Calu3 (cell line): ENCODE measurements at regions of chr7 and their contacts with region 1.

Region 1: GRCh38 chr7:47088329-47089067 is 493.4 kb downstream of the TNS3 start:
- DNase-seq: peak; percentile 77
- H3K4me3 Mint-ChIP-seq: no peak overlapping the region
- H3K27ac Mint-ChIP-seq: no peak overlapping the region
- H3K4me1 Mint-ChIP-seq: no peaks in the 10 kb centered on the region
- H3K27me3 Mint-ChIP-seq: no peaks in the 10 kb centered on the region
- CTCF ChIP-seq: peak; percentile 98

Region 2: DNA sequence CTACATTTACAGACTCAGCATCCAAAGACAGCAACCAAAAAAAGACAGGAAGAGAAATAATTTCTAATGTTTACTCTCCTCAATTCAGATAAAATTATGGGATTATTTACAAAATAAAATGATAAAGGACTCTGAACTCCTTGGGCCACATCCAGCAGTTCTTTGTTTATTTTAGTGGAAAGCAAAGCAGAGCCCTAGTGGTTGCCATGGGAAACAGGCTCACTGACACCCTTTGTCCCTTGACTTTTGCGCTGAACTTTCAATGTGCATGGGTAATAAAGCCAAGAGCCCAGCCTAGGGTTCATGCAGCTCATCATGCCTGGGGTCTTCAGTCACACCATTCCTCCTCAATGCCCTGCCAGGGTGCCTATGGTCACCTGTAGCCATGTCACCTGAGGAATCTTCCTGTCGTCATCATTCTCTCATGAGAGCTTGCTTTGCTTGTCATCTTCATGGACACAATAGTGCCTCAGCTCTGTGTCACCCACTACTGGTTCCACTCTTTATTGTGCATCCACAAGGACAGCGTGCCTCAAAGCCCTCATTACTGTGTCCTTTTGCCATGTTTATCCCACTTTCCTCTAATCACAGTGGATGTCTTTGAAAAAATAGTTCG is 724.7 kb before region 1 on chr7:
- CTCF ChIA-PET with region 1: no interaction called
- intact Hi-C with region 1: loop called (anchors 2 kb)
- DNase-seq: no peak
- H3K4me3 Mint-ChIP-seq: no peak overlapping the region
- H3K27ac Mint-ChIP-seq: no peak overlapping the region
- H3K4me1 Mint-ChIP-seq: peaks cover 19% of the 10 kb centered on the region
- H3K27me3 Mint-ChIP-seq: no peaks in the 10 kb centered on the region
- CTCF ChIP-seq: peak; percentile 29

Region 3: GRCh38 chr7:46569133-46569465 is 519.4 kb before region 1 on chr7:
- CTCF ChIA-PET with region 1: interaction called, 3 read pairs
- intact Hi-C with region 1: loop called (anchors 5 kb)
- DNase-seq: peak; percentile 86
- H3K4me3 Mint-ChIP-seq: peak overlapping the region; percentile 56
- H3K27ac Mint-ChIP-seq: peak overlapping the region; percentile 75
- H3K4me1 Mint-ChIP-seq: peaks cover 94% of the 10 kb centered on the region
- H3K27me3 Mint-ChIP-seq: no peaks in the 10 kb centered on the region
- CTCF ChIP-seq: no peak

Region 4: DNA sequence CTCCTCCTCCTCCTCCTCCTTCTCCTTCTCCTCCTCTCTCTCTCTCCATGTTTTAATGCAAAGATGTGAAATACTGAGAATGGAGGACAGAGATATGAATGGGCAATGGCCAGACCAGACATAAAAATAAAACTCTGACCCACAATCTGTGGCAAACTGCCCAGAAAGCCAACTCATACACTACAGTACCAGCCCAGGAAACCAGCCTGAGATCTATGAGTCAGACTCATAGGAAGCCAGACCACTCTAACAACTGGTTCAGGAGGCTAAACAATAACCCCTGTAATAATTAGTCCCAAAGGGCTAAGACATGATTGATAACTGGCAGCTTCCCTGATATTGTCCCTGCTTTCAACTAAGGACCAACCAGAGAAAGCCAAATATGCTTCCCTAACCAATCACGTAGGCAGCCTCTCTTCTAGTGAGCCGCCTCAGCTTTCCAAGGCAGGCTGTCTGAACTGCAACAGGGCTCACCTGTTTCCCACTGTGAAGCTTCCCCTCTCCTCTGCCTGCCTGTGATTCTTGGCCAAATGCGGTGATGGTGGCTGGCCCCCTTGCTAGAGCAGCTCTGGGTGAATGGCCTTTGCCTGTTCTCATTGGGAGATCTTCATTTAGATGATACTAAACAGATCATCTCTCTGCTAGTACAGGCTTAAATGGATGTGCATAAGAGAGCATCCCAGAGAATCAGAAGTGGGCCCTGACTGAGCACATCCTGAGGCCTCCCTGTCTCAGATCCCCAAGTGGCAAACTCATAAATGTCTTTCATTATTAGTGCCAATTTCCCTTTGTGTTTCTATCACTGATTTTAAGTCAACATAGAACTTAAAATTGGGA is 324.2 kb before region 1 on chr7:
- CTCF ChIA-PET with region 1: no interaction called
- intact Hi-C with region 1: loop called (anchors 5 kb)
- DNase-seq: peak; percentile 90
- H3K4me3 Mint-ChIP-seq: peak overlapping the region; percentile 4
- H3K27ac Mint-ChIP-seq: peak overlapping the region; percentile 80
- H3K4me1 Mint-ChIP-seq: peaks cover 30% of the 10 kb centered on the region
- H3K27me3 Mint-ChIP-seq: no peaks in the 10 kb centered on the region
- CTCF ChIP-seq: no peak

Region 5: DNA sequence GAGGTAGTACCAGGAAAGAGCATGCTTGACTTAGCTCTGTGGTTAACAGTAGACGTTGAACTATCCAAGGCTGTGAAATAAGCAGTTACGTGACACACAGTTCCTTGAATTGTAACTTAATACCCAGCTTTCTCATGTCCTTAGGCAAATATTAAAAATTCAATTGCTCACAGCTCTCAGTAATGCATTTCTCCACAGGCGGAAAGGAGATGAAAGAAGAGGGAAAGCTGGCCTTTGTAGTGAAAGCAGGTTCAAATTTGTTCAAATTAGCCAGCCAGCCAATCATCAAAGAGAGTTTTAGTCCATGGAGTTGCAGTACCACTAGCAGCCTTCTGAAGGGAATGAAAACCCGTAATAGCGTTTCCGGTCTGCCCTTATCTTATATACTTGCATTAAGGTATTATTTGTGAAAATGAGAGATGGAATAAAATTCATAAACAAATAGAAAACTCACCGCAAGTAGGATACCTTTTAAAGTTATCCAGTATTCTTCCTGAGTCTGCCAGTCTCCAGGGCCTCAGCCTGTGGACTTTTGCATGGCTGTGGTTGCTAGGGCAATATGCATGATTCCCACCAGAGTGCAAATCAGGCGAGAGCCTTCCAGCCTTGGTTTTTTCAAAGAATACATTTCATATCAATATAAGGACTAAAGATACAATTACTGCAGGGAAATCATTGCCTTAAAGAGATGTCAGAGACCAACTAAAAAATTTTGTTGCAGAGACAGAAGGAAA is 302.1 kb before region 1 on chr7:
- CTCF ChIA-PET with region 1: no interaction called
- intact Hi-C with region 1: loop called (anchors 2 kb)
- DNase-seq: peak; percentile 69
- H3K4me3 Mint-ChIP-seq: peak overlapping the region; percentile 45
- H3K27ac Mint-ChIP-seq: peak overlapping the region; percentile 95
- H3K4me1 Mint-ChIP-seq: peaks cover 29% of the 10 kb centered on the region
- H3K27me3 Mint-ChIP-seq: no peaks in the 10 kb centered on the region
- CTCF ChIP-seq: no peak

Region 6: DNA sequence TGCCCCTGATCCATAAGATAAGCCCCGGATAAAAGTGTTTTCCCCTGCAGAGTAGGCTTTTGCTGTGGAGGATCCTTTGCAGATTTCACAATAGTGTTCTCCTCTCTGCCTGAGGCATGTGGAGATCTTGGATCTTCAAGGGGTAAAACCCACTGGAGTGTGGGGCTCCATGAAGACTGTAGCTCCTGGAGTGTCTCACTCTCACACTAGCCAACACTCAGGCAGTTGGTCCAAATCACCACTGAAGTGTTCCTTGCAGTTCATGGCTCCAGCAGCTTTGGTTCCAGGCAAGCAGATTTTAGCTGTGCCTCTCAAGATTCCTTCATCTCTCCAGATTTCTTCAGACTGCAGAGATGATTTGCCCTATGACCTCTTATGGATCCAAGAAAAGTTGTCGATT is 171.9 kb before region 1 on chr7:
- CTCF ChIA-PET with region 1: no interaction called
- intact Hi-C with region 1: no loop called
- DNase-seq: no peak
- H3K4me3 Mint-ChIP-seq: no peak overlapping the region
- H3K27ac Mint-ChIP-seq: no peak overlapping the region
- H3K4me1 Mint-ChIP-seq: no peaks in the 10 kb centered on the region
- H3K27me3 Mint-ChIP-seq: no peaks in the 10 kb centered on the region
- CTCF ChIP-seq: no peak

Region 7: GRCh38 chr7:46932676-46933424 is 155.6 kb before region 1 on chr7:
- CTCF ChIA-PET with region 1: no interaction called
- intact Hi-C with region 1: loop called (anchors 2 kb)
- DNase-seq: peak; percentile 41
- H3K4me3 Mint-ChIP-seq: peak overlapping the region; percentile 18
- H3K27ac Mint-ChIP-seq: peak overlapping the region; percentile 99
- H3K4me1 Mint-ChIP-seq: peaks cover 59% of the 10 kb centered on the region
- H3K27me3 Mint-ChIP-seq: no peaks in the 10 kb centered on the region
- CTCF ChIP-seq: no peak

Region 8: GRCh38 chr7:47074702-47075153 is 13.8 kb before region 1 on chr7:
- CTCF ChIA-PET with region 1: no interaction called
- intact Hi-C with region 1: no loop called
- DNase-seq: no peak
- H3K4me3 Mint-ChIP-seq: no peak overlapping the region
- H3K27ac Mint-ChIP-seq: no peak overlapping the region
- H3K4me1 Mint-ChIP-seq: no peaks in the 10 kb centered on the region
- H3K27me3 Mint-ChIP-seq: no peaks in the 10 kb centered on the region
- CTCF ChIP-seq: no peak

Region 9: DNA sequence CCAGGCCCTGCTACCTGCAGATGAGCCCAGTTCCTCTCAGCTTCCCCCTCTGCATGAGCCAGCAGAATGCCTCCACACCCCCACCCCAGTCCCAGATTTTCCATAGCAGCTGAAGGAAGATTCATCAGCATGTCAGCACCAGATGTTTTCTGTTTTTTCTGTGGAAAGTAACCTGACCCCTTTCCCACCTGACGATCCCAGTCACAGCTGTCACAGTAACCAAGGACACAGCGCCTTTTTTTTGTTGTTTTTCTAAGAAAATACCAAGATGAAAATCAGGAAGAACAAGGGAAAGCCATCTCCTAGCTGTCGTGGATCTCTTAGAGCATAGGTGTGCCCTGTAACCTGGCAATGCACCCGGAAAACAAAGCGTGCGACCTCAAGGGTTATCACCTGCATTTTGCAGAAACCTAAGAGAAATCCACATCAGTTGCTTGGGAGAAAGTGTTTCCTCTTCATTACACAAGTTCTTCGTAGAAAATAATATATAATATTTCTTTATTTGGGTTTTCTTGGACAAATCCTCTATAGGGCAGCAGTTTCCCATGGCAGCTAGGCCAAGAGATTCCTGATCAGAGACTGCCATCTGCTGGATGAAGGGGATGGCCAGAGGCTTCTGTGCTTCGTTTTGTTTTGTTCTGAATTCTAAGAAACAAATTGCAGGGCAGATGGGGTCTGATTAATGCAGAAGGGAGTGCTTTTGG is 91.5 kb after region 1 on chr7:
- CTCF ChIA-PET with region 1: no interaction called
- intact Hi-C with region 1: loop called (anchors 5 kb)
- DNase-seq: peak; percentile 84
- H3K4me3 Mint-ChIP-seq: no peak overlapping the region
- H3K27ac Mint-ChIP-seq: no peak overlapping the region
- H3K4me1 Mint-ChIP-seq: peaks cover 21% of the 10 kb centered on the region
- H3K27me3 Mint-ChIP-seq: peaks cover 16% of the 10 kb centered on the region
- CTCF ChIP-seq: peak; percentile 89